ENCODE measurements at regions of chr11 and their contacts with region 1.

Region 1: GRCh38 chr11:33065445-33066178 is 26.2 kb downstream of the TCP11L1 start:
- DNase-seq: peak; percentile 73
- H3K4me3 Mint-ChIP-seq: no peak overlapping the region
- H3K27ac Mint-ChIP-seq: no peak overlapping the region
- H3K4me1 Mint-ChIP-seq: peaks cover 34% of the 10 kb centered on the region
- H3K27me3 Mint-ChIP-seq: no peaks in the 10 kb centered on the region

Region 2: GRCh38 chr11:32809313-32809712 is 256.3 kb before region 1 on chr11:
- CTCF ChIA-PET with region 1: interaction called, 19 read pairs
- POLR2A ChIA-PET with region 1: no interaction called
- DNase-seq: peak; percentile 62
- H3K4me3 Mint-ChIP-seq: no peak overlapping the region
- H3K27ac Mint-ChIP-seq: no peak overlapping the region
- H3K4me1 Mint-ChIP-seq: no peaks in the 10 kb centered on the region
- H3K27me3 Mint-ChIP-seq: peaks cover 6% of the 10 kb centered on the region

Region 3: GRCh38 chr11:32960553-32961164 is 105.0 kb before region 1 on chr11:
- CTCF ChIA-PET with region 1: interaction called, 121 read pairs
- POLR2A ChIA-PET with region 1: no interaction called
- DNase-seq: no peak
- H3K4me3 Mint-ChIP-seq: no peak overlapping the region
- H3K27ac Mint-ChIP-seq: no peak overlapping the region
- H3K4me1 Mint-ChIP-seq: peaks cover 9% of the 10 kb centered on the region
- H3K27me3 Mint-ChIP-seq: no peaks in the 10 kb centered on the region

Region 4: GRCh38 chr11:32968541-32968940 is 97.1 kb before region 1 on chr11:
- CTCF ChIA-PET with region 1: interaction called, 18 read pairs
- POLR2A ChIA-PET with region 1: no interaction called
- DNase-seq: no peak
- H3K4me3 Mint-ChIP-seq: no peak overlapping the region
- H3K27ac Mint-ChIP-seq: no peak overlapping the region
- H3K4me1 Mint-ChIP-seq: peaks cover 5% of the 10 kb centered on the region
- H3K27me3 Mint-ChIP-seq: no peaks in the 10 kb centered on the region

Region 5: DNA sequence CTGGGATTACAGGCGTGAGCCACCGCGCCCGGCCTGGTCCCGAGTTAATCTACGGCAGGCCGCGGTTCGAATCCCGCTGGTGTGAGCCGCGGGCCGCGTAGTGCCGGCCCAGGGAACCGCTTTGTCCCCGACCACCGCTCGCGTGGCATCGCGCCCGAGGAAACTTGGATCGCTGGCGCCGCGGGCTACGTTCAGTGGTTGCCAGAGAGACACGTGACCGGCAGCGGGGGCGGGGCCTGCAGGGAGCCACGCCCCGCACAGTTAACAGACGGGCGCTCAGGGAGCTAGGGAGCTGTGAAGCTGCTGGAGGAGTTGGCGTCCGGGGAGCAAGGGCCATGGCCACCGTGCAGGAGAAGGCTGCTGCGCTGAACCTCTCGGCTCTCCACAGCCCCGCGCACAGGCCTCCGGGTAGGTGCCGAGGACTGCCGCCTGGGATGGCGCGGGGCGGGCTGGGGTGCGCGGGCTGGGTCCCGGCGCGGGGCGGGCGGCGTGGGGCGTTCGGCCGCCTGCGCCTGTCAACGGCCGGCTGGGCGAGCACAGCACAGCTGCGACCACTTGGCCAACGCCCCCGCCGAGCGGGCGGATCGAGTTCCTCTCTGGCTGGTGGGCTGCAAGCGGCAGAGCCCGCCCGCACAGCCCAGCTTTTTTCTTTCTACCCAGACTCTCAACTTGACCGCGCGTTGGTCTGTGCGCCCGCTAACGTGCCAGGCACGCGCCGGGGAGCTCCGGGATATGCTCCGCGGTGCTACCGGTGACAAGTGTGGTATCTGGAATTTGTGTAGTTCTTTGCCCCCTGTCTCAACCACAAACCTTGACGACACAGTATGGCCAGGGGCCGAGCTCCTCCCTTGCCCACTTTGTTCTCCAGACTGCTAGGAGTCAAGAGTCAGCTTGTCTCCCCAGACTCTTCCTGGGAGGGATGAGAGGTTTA is 49.7 kb before region 1 on chr11 and contains the start of gene DEPDC7:
- CTCF ChIA-PET with region 1: interaction called, 11 read pairs
- POLR2A ChIA-PET with region 1: interaction called, 5 read pairs
- DNase-seq: peak; percentile 77
- H3K4me3 Mint-ChIP-seq: peak within 1 kb of the TSS; percentile 75
- H3K27ac Mint-ChIP-seq: no peak within 1 kb of the TSS
- H3K4me1 Mint-ChIP-seq: peaks cover 25% of the 10 kb centered on the region
- H3K27me3 Mint-ChIP-seq: peaks cover 61% of the 10 kb centered on the region
- total RNA-seq, gene DEPDC7: 1.1 TPM

Region 6: GRCh38 chr11:33039274-33040032 is 26.2 kb before region 1 on chr11 and contains the start of gene TCP11L1:
- CTCF ChIA-PET with region 1: interaction called, 12 read pairs
- POLR2A ChIA-PET with region 1: interaction called, 16 read pairs
- DNase-seq: peak; percentile 83
- H3K4me3 Mint-ChIP-seq: peak within 1 kb of the TSS; percentile 89
- H3K27ac Mint-ChIP-seq: peak within 1 kb of the TSS; percentile 89
- H3K4me1 Mint-ChIP-seq: peaks cover 31% of the 10 kb centered on the region
- H3K27me3 Mint-ChIP-seq: peaks cover 9% of the 10 kb centered on the region
- total RNA-seq, gene TCP11L1: 17.6 to 19.0 TPM

Region 7: GRCh38 chr11:33055361-33055760 is 10.3 kb before region 1 on chr11:
- CTCF ChIA-PET with region 1: interaction called, 15 read pairs
- POLR2A ChIA-PET with region 1: no interaction called
- DNase-seq: no peak
- H3K4me3 Mint-ChIP-seq: no peak overlapping the region
- H3K27ac Mint-ChIP-seq: no peak overlapping the region
- H3K4me1 Mint-ChIP-seq: peaks cover under 1% of the 10 kb centered on the region
- H3K27me3 Mint-ChIP-seq: no peaks in the 10 kb centered on the region

Region 8: GRCh38 chr11:33172996-33173395 is 107.4 kb after region 1 on chr11:
- CTCF ChIA-PET with region 1: no interaction called
- POLR2A ChIA-PET with region 1: no interaction called
- DNase-seq: no peak
- H3K4me3 Mint-ChIP-seq: no peak overlapping the region
- H3K27ac Mint-ChIP-seq: no peak overlapping the region
- H3K4me1 Mint-ChIP-seq: peaks cover 3% of the 10 kb centered on the region
- H3K27me3 Mint-ChIP-seq: no peaks in the 10 kb centered on the region

Region 9: DNA sequence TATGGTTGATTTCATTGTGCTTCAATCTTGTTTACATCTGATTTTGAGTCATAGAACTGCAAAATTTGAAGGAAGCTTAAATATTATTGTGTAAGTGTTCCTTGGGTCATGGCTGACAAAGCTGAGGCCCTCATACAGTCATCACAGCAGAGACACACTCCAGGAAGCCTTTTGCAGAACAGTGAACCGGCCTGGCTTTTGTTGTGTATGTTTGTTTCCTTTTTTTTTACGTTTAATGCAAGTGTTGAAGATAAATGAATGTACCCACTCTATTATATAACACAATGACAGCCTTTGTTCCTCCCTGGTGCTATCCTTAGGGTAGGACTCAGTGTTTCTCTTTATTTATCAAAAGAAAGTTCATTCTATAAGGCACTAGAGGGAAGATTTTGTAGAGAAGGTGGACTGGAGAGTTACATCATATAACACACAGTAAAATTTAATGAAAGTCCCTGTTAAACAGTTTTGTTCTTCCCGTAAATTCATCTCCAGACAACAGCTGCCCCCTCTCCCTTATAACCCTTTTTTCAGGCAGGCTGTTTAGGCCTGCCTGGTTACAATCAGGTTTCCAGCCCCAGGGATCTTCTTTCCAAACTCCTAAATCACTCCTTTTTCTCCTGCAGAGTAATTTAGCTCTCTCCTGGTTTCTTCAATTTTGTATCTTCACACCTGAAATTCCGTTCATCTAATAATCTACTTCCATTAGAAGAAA is 130.0 kb after region 1 on chr11:
- CTCF ChIA-PET with region 1: no interaction called
- POLR2A ChIA-PET with region 1: no interaction called
- DNase-seq: no peak
- H3K4me3 Mint-ChIP-seq: no peak overlapping the region
- H3K27ac Mint-ChIP-seq: no peak overlapping the region
- H3K4me1 Mint-ChIP-seq: peaks cover 2% of the 10 kb centered on the region
- H3K27me3 Mint-ChIP-seq: no peaks in the 10 kb centered on the region